Ascending aorta (tissue), 2 donors: ENCODE measurements at regions of chr2 and their contacts with region 1.

Region 1: GRCh38 chr2:3536682-3537632 is 17.6 kb upstream of the ADI1 start:
- DNase-seq: peak in 1 of 2 donors; percentile 77
- H3K4me3 ChIP-seq: peak overlapping the region; percentile 46 to 61
- H3K27ac ChIP-seq: peak overlapping the region; percentile 95 to 96
- H3K4me1 ChIP-seq: peaks cover 3 to 18% of the 10 kb centered on the region in 2 donors
- H3K27me3 ChIP-seq: no peaks in the 10 kb centered on the region
- CTCF ChIP-seq: peak; percentile 46 to 57 (median 47)

Region 2: GRCh38 chr2:3379647-3380534 is 157.1 kb before region 1 on chr2 and contains the start of gene TRAPPC12:
- intact Hi-C with region 1: loop called (anchors 1 kb)
- DNase-seq: peak; percentile 57 to 95
- H3K4me3 ChIP-seq: peak within 1 kb of the TSS; percentile 77 to 81
- H3K27ac ChIP-seq: peak within 1 kb of the TSS; percentile 86 to 95
- H3K4me1 ChIP-seq: peaks cover 3 to 19% of the 10 kb centered on the region in 2 donors
- H3K27me3 ChIP-seq: no peaks in the 10 kb centered on the region
- CTCF ChIP-seq: peak in 2 of 3 experiments; percentile 20 to 54
- total RNA-seq, gene TRAPPC12: 94.0 TPM

Region 3: GRCh38 chr2:3461801-3462492 is 75.0 kb before region 1 on chr2:
- intact Hi-C with region 1: loop called (anchors 1 kb)
- DNase-seq: peak in 1 of 2 donors; percentile 63
- H3K4me3 ChIP-seq: peak overlapping the region in 1 of 2 donors; percentile 32
- H3K27ac ChIP-seq: peak overlapping the region; percentile 78 to 90
- H3K4me1 ChIP-seq: peaks cover 6 to 7% of the 10 kb centered on the region in 2 donors
- H3K27me3 ChIP-seq: no peaks in the 10 kb centered on the region
- CTCF ChIP-seq: peak; percentile 54 to 97 (median 81)

Region 4: GRCh38 chr2:3470166-3470651 is 66.7 kb before region 1 on chr2:
- intact Hi-C with region 1: loop called (anchors 2 kb)
- DNase-seq: peak; percentile 60 to 93
- H3K4me3 ChIP-seq: peak overlapping the region in 1 of 2 donors; percentile 25
- H3K27ac ChIP-seq: peak overlapping the region; percentile 90 to 91
- H3K4me1 ChIP-seq: peaks cover 2 to 28% of the 10 kb centered on the region in 2 donors
- H3K27me3 ChIP-seq: no peaks in the 10 kb centered on the region
- CTCF ChIP-seq: no peak

Region 5: DNA sequence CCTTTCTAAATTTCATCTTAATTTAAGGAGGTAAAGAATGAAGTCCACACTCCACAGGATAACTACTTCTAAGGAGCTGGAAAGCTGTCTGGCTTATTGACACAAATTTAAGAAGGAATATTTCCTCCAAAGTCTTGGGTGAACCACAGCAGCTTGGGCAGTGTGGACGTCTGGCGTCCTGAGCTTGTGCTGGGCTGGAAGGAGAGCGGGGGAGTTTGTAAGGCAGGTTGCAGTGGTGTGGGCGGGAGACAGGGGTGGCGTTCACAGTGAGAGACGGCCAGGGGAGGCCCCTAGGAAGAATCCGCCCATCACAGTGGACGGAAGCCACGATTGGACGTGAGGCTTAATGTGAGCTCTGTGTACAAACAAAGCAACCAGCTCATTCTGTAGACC is 43.3 kb before region 1 on chr2:
- intact Hi-C with region 1: loop called (anchors 1 kb)
- DNase-seq: no peak
- H3K4me3 ChIP-seq: peak overlapping the region; percentile 21 to 55
- H3K27ac ChIP-seq: peak overlapping the region; percentile 90 to 93
- H3K4me1 ChIP-seq: peaks cover 6 to 16% of the 10 kb centered on the region in 2 donors
- H3K27me3 ChIP-seq: no peaks in the 10 kb centered on the region
- CTCF ChIP-seq: no peak

Region 6: GRCh38 chr2:3518496-3519254 is 18.3 kb before region 1 on chr2:
- intact Hi-C with region 1: loop called (anchors 1 kb)
- DNase-seq: peak; percentile 91 to 98
- H3K4me3 ChIP-seq: peak overlapping the region; percentile 84 to 93
- H3K27ac ChIP-seq: peak overlapping the region; percentile 97 to 100
- H3K4me1 ChIP-seq: peaks cover 4 to 18% of the 10 kb centered on the region in 2 donors
- H3K27me3 ChIP-seq: no peaks in the 10 kb centered on the region
- CTCF ChIP-seq: no peak